Activated naive CD4-positive, alpha-beta T cell treated with anti-CD3 and anti-CD28 coated beads for 36 hours (primary cell): ENCODE measurements at regions of chr12 and their contacts with region 1.

Region 1: GRCh38 chr12:27243804-27244683 is at the start of gene STK38L:
- DNase-seq: peak; percentile 98
- H3K4me3 Mint-ChIP-seq: peak within 1 kb of the TSS; percentile 98
- H3K27ac Mint-ChIP-seq: peak within 1 kb of the TSS; percentile 91
- H3K4me1 Mint-ChIP-seq: peaks cover 47% of the 10 kb centered on the region
- H3K27me3 Mint-ChIP-seq: no peaks in the 10 kb centered on the region
- total RNA-seq, gene STK38L: 21.3 to 21.4 TPM

Region 2: GRCh38 chr12:26937875-26938700 is 306.0 kb before region 1 on chr12 and contains the starts of genes FGFR1OP2 and INTS13:
- CTCF ChIA-PET with region 1: no interaction called
- intact Hi-C with region 1: loop called (anchors 1 kb)
- DNase-seq: peak; percentile 99
- H3K4me3 Mint-ChIP-seq: peak within 1 kb of the TSS; percentile 93
- H3K27ac Mint-ChIP-seq: peak within 1 kb of the TSS; percentile 98
- H3K4me1 Mint-ChIP-seq: peaks cover 52% of the 10 kb centered on the region
- H3K27me3 Mint-ChIP-seq: no peaks in the 10 kb centered on the region
- total RNA-seq, gene FGFR1OP2: 37.0 to 38.4 TPM
- total RNA-seq, gene INTS13: 39.6 to 42.0 TPM

Region 3: DNA sequence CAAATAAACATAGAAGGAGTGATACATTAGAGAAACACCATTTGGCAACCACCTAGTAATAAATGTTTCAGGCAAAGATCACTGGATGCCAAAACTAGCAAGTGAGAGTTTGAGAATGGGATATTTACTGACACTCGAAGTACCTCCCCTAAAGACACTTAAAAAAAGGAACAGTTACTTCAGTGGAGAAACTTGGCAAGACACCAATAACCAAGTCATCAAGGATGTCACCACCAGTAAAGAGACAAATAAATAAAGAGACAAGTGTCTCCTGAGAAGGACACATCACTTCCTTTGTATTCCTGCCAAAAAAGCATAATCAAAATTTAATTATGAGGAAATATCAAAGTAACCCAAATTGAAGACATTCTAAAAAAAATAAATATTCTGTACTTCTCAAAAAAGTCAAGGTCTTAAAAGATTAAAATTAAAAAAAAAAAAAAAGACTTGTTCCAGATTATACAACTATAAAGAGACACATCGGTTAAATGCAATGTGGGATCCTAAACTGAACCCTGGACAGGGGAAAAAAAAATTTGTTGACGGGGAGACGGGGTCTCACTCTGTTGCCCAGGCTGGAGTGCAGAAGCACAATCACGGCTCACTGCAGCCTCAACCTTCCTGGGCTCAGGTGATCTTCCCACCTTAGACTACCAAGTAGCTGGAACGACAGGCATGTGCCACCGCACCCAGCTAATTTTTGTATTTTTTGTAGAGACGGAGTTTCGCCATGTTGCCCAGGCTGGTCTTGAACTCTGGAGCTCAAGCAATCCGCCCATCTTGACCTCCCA is 256.2 kb before region 1 on chr12:
- CTCF ChIA-PET with region 1: no interaction called
- intact Hi-C with region 1: no loop called
- DNase-seq: no peak
- H3K4me3 Mint-ChIP-seq: no peak overlapping the region
- H3K27ac Mint-ChIP-seq: no peak overlapping the region
- H3K4me1 Mint-ChIP-seq: no peaks in the 10 kb centered on the region
- H3K27me3 Mint-ChIP-seq: no peaks in the 10 kb centered on the region

Region 4: DNA sequence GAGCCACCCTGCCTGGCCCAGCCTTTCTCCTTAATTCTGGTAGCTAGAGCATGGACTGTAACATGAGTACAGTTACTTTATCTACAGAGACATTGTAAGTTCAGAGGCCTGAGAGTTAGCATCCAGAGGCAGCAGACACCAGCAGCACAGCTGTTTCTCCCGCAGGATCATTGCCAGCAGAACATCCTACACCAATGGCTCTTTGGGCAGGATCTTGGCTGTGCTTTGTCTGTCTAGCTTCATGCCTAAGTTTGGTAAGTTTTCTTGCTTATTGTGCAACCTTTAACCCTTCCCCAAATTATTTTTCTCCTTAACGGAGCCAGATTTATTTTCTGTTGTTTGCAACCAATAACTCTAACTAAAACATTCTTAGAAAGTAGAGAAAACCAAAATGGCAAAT is 183.3 kb before region 1 on chr12:
- CTCF ChIA-PET with region 1: no interaction called
- intact Hi-C with region 1: no loop called
- DNase-seq: no peak
- H3K4me3 Mint-ChIP-seq: no peak overlapping the region
- H3K27ac Mint-ChIP-seq: no peak overlapping the region
- H3K4me1 Mint-ChIP-seq: no peaks in the 10 kb centered on the region
- H3K27me3 Mint-ChIP-seq: no peaks in the 10 kb centered on the region

Region 5: GRCh38 chr12:27076933-27077332 is 167.1 kb before region 1 on chr12:
- CTCF ChIA-PET with region 1: no interaction called
- intact Hi-C with region 1: no loop called
- DNase-seq: no peak
- H3K4me3 Mint-ChIP-seq: no peak overlapping the region
- H3K27ac Mint-ChIP-seq: no peak overlapping the region
- H3K4me1 Mint-ChIP-seq: no peaks in the 10 kb centered on the region
- H3K27me3 Mint-ChIP-seq: no peaks in the 10 kb centered on the region

Region 6: GRCh38 chr12:27185234-27186021 is 58.6 kb before region 1 on chr12:
- CTCF ChIA-PET with region 1: no interaction called
- intact Hi-C with region 1: loop called (anchors 1 kb)
- DNase-seq: peak; percentile 71
- H3K4me3 Mint-ChIP-seq: no peak overlapping the region
- H3K27ac Mint-ChIP-seq: no peak overlapping the region
- H3K4me1 Mint-ChIP-seq: peaks cover 19% of the 10 kb centered on the region
- H3K27me3 Mint-ChIP-seq: no peaks in the 10 kb centered on the region

Region 7: DNA sequence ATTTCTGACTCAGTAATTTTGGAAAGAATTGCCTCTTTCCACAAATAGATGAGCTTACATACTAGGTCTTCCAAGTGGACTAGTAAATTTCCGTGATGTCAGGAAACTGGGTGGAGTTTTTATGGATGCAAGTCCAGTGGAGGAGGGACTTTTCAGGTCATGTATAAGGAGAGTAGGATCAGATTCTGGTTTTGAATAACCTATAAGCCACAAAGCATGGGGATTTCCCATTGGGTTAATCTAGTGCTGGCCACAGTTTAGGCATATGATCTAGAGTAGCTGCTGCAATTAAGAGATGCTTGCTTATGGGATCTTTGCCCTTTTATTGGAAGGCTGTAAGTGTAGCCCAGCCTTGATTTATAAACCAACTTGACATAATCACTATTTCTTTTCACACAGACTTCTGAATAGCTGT is 33.8 kb after region 1 on chr12:
- CTCF ChIA-PET with region 1: no interaction called
- intact Hi-C with region 1: loop called (anchors 2 kb)
- DNase-seq: peak; percentile 34
- H3K4me3 Mint-ChIP-seq: no peak overlapping the region
- H3K27ac Mint-ChIP-seq: no peak overlapping the region
- H3K4me1 Mint-ChIP-seq: peaks cover 33% of the 10 kb centered on the region
- H3K27me3 Mint-ChIP-seq: no peaks in the 10 kb centered on the region

Region 8: DNA sequence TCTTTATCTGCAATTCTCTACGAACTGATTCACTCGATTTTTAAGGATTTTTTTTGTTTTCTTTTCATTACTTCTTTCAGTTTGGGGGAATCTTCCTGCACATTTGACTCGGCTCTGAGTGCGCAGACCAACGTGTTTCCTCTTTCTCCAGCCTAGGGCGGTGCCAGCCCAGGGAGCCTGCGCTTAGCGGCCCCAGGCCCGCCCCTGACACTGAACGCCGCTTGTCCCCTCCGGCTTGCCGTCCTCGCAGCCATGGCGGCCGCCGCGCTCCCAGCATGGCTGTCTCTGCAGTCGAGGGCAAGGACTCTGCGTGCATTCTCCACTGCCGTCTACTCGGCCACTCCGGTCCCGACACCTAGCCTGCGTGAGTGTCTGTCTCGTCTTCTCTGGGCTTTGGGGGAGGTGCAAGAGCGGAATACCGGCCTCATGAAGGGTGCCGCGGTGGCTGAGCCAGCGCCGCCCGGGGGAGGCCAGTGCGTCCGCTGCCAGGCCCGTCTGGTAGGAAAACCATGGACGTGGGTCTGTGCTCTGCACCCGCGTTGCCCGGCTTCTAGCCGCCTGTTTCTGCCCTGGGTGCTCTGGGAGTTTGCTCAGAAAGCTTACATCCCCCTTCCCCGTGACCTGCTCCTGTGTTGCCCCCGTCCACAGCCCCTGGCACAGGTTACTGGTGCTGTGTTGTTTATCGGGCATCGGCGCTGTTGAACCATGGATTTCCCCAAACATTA is 466.7 kb after region 1 on chr12 and contains the start of gene MRPS35:
- CTCF ChIA-PET with region 1: no interaction called
- intact Hi-C with region 1: loop called (anchors 2 kb)
- DNase-seq: peak; percentile 95
- H3K4me3 Mint-ChIP-seq: peak within 1 kb of the TSS; percentile 98
- H3K27ac Mint-ChIP-seq: peak within 1 kb of the TSS; percentile 92
- H3K4me1 Mint-ChIP-seq: peaks cover 18% of the 10 kb centered on the region
- H3K27me3 Mint-ChIP-seq: no peaks in the 10 kb centered on the region
- total RNA-seq, gene MRPS35: 53.1 to 57.6 TPM